Activated CD8-positive, alpha-beta T cell treated with anti-CD3 and anti-CD28 coated beads for 36 hours (primary cell): ENCODE measurements at regions of chr7 and their contacts with region 1.

Region 1: GRCh38 chr7:104983578-104984539 is 30.1 kb upstream of the KMT2E start:
- DNase-seq: peak; percentile 90
- ATAC-seq: peak; percentile 89
- H3K4me3 Mint-ChIP-seq: peak overlapping the region; percentile 86
- H3K27ac Mint-ChIP-seq: peak overlapping the region; percentile 100
- H3K4me1 Mint-ChIP-seq: peaks cover 70% of the 10 kb centered on the region
- H3K27me3 Mint-ChIP-seq: no peaks in the 10 kb centered on the region
- CTCF ChIP-seq: peak; percentile 65

Region 2: DNA sequence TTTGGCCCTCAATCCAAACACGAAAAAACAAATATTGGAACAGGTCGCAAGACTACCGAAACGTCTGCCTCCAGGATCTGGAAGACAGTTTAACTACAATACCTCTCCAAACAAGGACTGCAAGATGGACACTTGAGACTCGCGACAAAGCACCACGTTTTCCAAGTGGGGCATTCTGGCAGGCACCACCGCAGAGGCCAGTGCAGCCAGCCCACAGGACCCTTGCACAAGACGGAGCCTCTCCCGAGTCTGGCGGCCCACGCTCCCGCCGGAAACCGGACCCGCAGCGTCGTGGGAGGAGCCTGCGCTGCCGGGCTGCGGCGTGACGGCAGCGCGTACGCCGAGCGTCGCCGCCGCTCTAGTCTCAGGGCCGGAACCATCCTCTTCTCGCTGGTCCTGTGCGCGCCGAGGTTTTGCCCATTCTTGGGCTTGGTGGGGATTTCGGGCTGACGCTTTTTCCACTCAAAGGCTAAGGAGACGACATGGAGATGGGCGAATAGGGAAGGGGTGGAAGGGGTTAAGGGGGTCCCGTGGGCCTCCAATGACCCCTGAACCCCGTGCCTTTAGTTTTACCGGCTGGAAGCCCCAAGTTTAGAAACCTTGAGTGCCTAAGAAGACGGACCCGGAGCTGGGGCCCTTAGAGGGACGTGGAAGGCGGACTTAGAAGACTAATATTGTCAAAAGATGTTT is 776.0 kb before region 1 on chr7 and contains the start of gene ORC5:
- CTCF ChIA-PET with region 1: no interaction called
- POLR2A ChIA-PET with region 1: no interaction called
- intact Hi-C with region 1: no loop called
- DNase-seq: peak; percentile 82
- ATAC-seq: peak; percentile 100
- H3K4me3 Mint-ChIP-seq: peak within 1 kb of the TSS; percentile 81
- H3K27ac Mint-ChIP-seq: peak within 1 kb of the TSS; percentile 92
- H3K4me1 Mint-ChIP-seq: peaks cover 26% of the 10 kb centered on the region
- H3K27me3 Mint-ChIP-seq: peaks cover 13% of the 10 kb centered on the region
- CTCF ChIP-seq: no peak
- total RNA-seq, gene ORC5: 22.1 to 26.0 TPM

Region 3: DNA sequence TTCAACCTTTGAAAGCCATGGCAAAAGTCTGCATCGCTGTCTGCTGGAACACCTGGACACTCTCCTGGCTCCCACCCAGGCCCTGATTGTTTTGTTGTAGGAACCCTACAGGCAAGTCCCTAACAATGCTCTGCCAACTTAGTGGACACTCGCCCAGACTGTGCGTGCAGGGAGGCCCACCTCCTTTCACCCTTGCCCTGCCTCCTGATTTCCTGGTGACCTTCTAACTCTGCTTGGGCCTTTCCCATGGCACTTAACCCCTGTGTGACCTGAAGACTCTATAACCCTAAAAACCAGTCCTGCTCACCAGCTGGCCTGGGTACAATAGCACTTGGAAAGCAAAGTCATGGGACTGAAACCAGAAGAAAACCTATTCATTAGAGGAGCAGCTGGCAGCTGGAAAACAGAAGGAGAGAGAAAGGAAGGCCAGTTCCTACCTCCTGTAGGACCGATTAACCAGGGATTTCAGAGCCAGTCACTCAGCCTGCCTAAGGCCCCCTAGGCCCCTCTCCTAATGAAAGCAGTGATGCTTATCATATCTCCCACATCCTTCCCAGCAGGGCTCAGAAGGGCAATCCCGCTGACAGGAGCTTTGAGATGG is 52.6 kb before region 1 on chr7:
- CTCF ChIA-PET with region 1: interaction called, 56 read pairs
- POLR2A ChIA-PET with region 1: no interaction called
- intact Hi-C with region 1: no loop called
- DNase-seq: no peak
- ATAC-seq: no peak
- H3K4me3 Mint-ChIP-seq: no peak overlapping the region
- H3K27ac Mint-ChIP-seq: no peak overlapping the region
- H3K4me1 Mint-ChIP-seq: no peaks in the 10 kb centered on the region
- H3K27me3 Mint-ChIP-seq: no peaks in the 10 kb centered on the region
- CTCF ChIP-seq: no peak

Region 4: GRCh38 chr7:104971290-104972071 is 12.4 kb before region 1 on chr7:
- CTCF ChIA-PET with region 1: interaction called, 78 read pairs
- POLR2A ChIA-PET with region 1: interaction called, 5 read pairs
- intact Hi-C with region 1: no loop called
- DNase-seq: no peak
- ATAC-seq: no peak
- H3K4me3 Mint-ChIP-seq: no peak overlapping the region
- H3K27ac Mint-ChIP-seq: no peak overlapping the region
- H3K4me1 Mint-ChIP-seq: peaks cover 7% of the 10 kb centered on the region
- H3K27me3 Mint-ChIP-seq: no peaks in the 10 kb centered on the region
- CTCF ChIP-seq: no peak

Region 5: GRCh38 chr7:105003275-105003674 is 19.4 kb after region 1 on chr7:
- CTCF ChIA-PET with region 1: interaction called, 210 read pairs
- POLR2A ChIA-PET with region 1: interaction called, 19 read pairs
- intact Hi-C with region 1: no loop called
- DNase-seq: peak; percentile 75
- ATAC-seq: peak; percentile 91
- H3K4me3 Mint-ChIP-seq: peak overlapping the region; percentile 61
- H3K27ac Mint-ChIP-seq: peak overlapping the region; percentile 47
- H3K4me1 Mint-ChIP-seq: peaks cover 78% of the 10 kb centered on the region
- H3K27me3 Mint-ChIP-seq: no peaks in the 10 kb centered on the region
- CTCF ChIP-seq: no peak

Region 6: GRCh38 chr7:105024743-105025142 is 40.9 kb after region 1 on chr7:
- CTCF ChIA-PET with region 1: interaction called, 11 read pairs
- POLR2A ChIA-PET with region 1: interaction called, 4 read pairs
- intact Hi-C with region 1: no loop called
- DNase-seq: no peak
- ATAC-seq: peak; percentile 25
- H3K4me3 Mint-ChIP-seq: no peak overlapping the region
- H3K27ac Mint-ChIP-seq: peak overlapping the region; percentile 40
- H3K4me1 Mint-ChIP-seq: peaks cover 85% of the 10 kb centered on the region
- H3K27me3 Mint-ChIP-seq: no peaks in the 10 kb centered on the region
- CTCF ChIP-seq: no peak

Region 7: DNA sequence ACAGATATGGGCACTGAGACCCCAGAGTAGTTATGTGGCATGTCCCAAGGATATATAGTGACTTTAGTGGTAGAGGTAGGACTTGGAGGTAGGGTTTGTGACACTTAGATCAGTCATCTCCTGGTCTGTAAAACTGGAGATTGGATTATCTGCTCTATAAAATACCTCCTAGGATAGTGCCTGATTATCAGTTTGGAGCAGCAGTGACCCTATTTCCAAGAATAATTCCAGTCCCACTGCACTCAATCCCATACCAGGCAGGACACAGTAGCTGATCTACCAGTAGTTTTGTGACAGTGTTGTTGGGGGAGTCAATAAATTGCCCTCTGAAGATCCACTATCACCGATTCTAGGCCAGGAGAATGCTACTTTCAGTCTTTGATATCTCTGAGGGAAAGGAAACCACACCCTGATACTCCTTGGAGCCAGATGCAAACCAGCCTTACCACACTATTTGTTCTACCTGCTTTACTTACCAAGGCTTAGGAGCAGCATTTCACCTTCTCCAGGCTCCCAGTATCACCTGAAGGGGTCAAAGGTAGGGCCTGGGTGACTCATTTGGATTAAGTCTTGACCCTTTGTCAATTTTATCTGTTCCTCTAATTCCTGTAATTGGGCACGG is 60.7 kb after region 1 on chr7:
- CTCF ChIA-PET with region 1: interaction called, 7 read pairs
- POLR2A ChIA-PET with region 1: interaction called, 3 read pairs
- intact Hi-C with region 1: loop called (anchors 5 kb)
- DNase-seq: no peak
- ATAC-seq: no peak
- H3K4me3 Mint-ChIP-seq: no peak overlapping the region
- H3K27ac Mint-ChIP-seq: peak overlapping the region; percentile 18
- H3K4me1 Mint-ChIP-seq: peaks cover 41% of the 10 kb centered on the region
- H3K27me3 Mint-ChIP-seq: no peaks in the 10 kb centered on the region
- CTCF ChIP-seq: no peak

Region 8: GRCh38 chr7:105096306-105096705 is 112.4 kb after region 1 on chr7:
- CTCF ChIA-PET with region 1: no interaction called
- POLR2A ChIA-PET with region 1: no interaction called
- intact Hi-C with region 1: no loop called
- DNase-seq: no peak
- ATAC-seq: no peak
- H3K4me3 Mint-ChIP-seq: no peak overlapping the region
- H3K27ac Mint-ChIP-seq: peak overlapping the region; percentile 49
- H3K4me1 Mint-ChIP-seq: peaks cover 55% of the 10 kb centered on the region
- H3K27me3 Mint-ChIP-seq: no peaks in the 10 kb centered on the region
- CTCF ChIP-seq: no peak

Region 9: DNA sequence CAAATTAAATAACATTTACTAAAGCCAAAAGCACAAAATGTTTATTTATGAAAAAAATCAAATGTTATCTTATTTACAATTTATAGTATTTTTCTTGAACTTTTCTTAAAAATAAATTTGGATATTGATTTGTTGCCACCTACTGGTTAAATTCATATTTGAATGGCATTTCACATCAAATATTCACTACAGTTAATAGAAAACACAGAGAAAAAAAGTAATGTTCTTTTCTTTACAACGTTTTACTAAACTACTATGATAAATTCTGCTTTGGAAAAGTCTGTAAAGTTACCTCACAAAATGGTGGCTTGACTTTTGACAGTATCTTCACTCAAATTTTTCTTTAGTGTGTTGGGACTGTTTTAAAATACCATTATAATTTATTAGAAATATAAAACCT is 352.1 kb after region 1 on chr7:
- CTCF ChIA-PET with region 1: no interaction called
- POLR2A ChIA-PET with region 1: no interaction called
- intact Hi-C with region 1: loop called (anchors 10 kb)
- DNase-seq: no peak
- ATAC-seq: no peak
- H3K4me3 Mint-ChIP-seq: no peak overlapping the region
- H3K27ac Mint-ChIP-seq: no peak overlapping the region
- H3K4me1 Mint-ChIP-seq: peaks cover 23% of the 10 kb centered on the region
- H3K27me3 Mint-ChIP-seq: no peaks in the 10 kb centered on the region
- CTCF ChIP-seq: peak; percentile 53